PC-9 (cell line): ENCODE measurements at regions of chr16 and their contacts with region 1.

Region 1: GRCh38 chr16:84511180-84511824 is 6.8 kb upstream of the MEAK7 start:
- DNase-seq: peak; percentile 66 to 76
- H3K4me3 ChIP-seq: no peak overlapping the region
- H3K27ac ChIP-seq: no peak overlapping the region
- H3K4me1 ChIP-seq: peaks cover 9% of the 10 kb centered on the region; the same call in 1 of the 2 replicates
- H3K27me3 ChIP-seq: no peaks in the 10 kb centered on the region
- CTCF ChIP-seq: peak; percentile 96

Region 2: GRCh38 chr16:84487358-84487757 is 23.9 kb before region 1 on chr16:
- CTCF ChIA-PET with region 1: no interaction called
- POLR2A ChIA-PET with region 1: no interaction called
- intact Hi-C with region 1: no loop called
- DNase-seq: no peak
- H3K4me3 ChIP-seq: no peak overlapping the region
- H3K27ac ChIP-seq: no peak overlapping the region
- H3K4me1 ChIP-seq: no peaks in the 10 kb centered on the region
- H3K27me3 ChIP-seq: no peaks in the 10 kb centered on the region
- CTCF ChIP-seq: no peak

Region 3: GRCh38 chr16:84555418-84556195 is 44.3 kb after region 1 on chr16:
- CTCF ChIA-PET with region 1: interaction called, 3 read pairs
- POLR2A ChIA-PET with region 1: no interaction called
- intact Hi-C with region 1: loop called (anchors 5 kb)
- DNase-seq: peak; percentile 30 to 35
- H3K4me3 ChIP-seq: no peak overlapping the region
- H3K27ac ChIP-seq: no peak overlapping the region
- H3K4me1 ChIP-seq: peaks cover 17% of the 10 kb centered on the region; the same call in 1 of the 2 replicates
- H3K27me3 ChIP-seq: no peaks in the 10 kb centered on the region
- CTCF ChIP-seq: no peak

Region 4: DNA sequence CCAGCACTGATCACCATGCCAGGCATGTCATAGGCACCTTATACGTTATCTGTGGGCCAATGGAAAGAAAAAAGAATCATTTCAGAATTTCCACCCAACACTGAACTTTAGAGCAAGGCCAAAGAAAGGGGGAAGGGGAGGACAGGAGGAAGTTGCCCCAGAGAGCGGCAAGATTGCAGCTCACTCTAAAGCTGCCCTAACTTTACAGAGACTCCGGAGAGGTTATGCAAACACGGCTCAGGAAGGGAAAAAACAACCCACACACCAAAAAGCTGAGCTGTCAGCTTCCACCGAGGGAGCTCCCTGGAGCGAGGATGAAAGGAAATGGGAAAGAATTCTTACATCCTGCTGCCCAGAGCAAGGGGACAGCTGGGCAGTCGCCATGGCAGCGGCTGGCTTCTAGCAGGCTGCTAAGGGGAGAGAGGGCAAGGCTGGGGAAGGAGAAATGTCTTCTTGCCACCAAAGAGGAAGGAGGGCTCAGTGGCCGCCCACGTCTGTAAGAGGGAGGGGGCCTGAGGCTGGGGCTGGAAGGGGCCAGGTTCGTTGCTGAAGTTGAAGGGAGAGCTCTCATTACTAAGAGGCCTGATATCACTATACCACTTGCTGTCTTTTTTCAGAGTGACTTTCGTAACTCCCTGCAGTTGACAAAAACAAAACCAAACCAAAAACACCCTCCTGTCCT is 88.4 kb after region 1 on chr16:
- CTCF ChIA-PET with region 1: no interaction called
- POLR2A ChIA-PET with region 1: interaction called, 9 read pairs
- intact Hi-C with region 1: loop called (anchors 1 kb)
- DNase-seq: no peak
- H3K4me3 ChIP-seq: no peak overlapping the region
- H3K27ac ChIP-seq: no peak overlapping the region; the same call in 1 of the 2 replicates
- H3K4me1 ChIP-seq: peaks cover 16% of the 10 kb centered on the region; the same call in 1 of the 2 replicates
- H3K27me3 ChIP-seq: no peaks in the 10 kb centered on the region
- CTCF ChIP-seq: no peak

Region 5: GRCh38 chr16:84606081-84606875 is 95.0 kb after region 1 on chr16:
- CTCF ChIA-PET with region 1: interaction called, 10 read pairs
- POLR2A ChIA-PET with region 1: no interaction called
- intact Hi-C with region 1: loop called (anchors 1 kb)
- DNase-seq: no peak
- H3K4me3 ChIP-seq: no peak overlapping the region
- H3K27ac ChIP-seq: no peak overlapping the region
- H3K4me1 ChIP-seq: peaks cover 16% of the 10 kb centered on the region; the same call in 1 of the 2 replicates
- H3K27me3 ChIP-seq: no peaks in the 10 kb centered on the region
- CTCF ChIP-seq: no peak

Region 6: DNA sequence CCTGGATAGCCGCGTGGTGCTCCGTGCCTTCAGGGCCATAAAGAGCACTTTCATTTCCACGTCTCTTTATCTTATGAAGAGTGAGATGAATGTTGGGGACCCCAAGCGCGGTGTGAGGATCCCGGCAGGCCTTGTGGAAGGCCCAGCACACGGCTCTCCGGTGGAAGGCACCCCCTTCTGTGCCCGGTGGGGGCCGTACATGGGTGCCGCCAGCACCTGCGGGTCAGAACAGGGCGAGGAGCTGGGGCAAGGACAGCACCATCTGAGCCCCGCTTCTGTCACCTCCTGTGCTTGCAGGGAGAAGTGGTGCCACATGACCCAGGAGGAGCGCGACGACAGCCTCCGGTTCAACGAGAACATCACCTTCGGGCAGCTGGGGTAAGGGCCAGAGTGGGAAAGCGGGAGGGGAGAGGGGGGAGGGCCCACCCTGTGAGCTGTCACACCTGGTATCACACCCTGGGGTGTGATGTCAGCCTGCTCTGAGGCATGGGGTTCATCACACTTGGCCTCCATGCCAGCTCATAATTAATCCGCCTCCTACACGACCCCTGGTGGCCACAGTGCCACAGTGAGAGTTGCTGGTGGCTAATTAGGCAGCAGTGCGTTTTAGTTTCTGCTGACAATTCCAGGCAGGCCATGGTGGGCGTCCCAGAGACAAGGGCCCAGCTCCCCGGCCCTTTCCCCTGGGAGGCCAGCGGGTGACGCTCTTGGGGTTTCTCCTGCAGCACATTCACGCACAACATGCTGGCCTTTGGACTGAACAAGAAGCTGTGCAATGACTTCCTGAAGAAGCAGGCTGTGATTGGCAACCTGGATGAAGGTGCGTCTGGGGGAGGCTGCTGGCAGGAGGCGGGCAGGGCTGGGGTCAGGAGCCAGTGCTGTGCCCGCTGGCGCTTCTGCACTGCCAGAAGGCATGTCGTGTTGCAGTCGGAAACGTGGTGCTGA is 575.3 kb after region 1 on chr16:
- CTCF ChIA-PET with region 1: interaction called, 10 read pairs
- POLR2A ChIA-PET with region 1: no interaction called
- intact Hi-C with region 1: no loop called
- DNase-seq: peak; percentile 52 to 75
- H3K4me3 ChIP-seq: no peak overlapping the region
- H3K27ac ChIP-seq: no peak overlapping the region
- H3K4me1 ChIP-seq: no peaks in the 10 kb centered on the region
- H3K27me3 ChIP-seq: 0 out of 2 replicates have a peak, but pooled peaks cover 9% of the 10 kb centered on the region
- CTCF ChIP-seq: peak; percentile 86